A549 (cell line): ENCODE measurements at regions of chr17 and their contacts with region 1.

Region 1: DNA sequence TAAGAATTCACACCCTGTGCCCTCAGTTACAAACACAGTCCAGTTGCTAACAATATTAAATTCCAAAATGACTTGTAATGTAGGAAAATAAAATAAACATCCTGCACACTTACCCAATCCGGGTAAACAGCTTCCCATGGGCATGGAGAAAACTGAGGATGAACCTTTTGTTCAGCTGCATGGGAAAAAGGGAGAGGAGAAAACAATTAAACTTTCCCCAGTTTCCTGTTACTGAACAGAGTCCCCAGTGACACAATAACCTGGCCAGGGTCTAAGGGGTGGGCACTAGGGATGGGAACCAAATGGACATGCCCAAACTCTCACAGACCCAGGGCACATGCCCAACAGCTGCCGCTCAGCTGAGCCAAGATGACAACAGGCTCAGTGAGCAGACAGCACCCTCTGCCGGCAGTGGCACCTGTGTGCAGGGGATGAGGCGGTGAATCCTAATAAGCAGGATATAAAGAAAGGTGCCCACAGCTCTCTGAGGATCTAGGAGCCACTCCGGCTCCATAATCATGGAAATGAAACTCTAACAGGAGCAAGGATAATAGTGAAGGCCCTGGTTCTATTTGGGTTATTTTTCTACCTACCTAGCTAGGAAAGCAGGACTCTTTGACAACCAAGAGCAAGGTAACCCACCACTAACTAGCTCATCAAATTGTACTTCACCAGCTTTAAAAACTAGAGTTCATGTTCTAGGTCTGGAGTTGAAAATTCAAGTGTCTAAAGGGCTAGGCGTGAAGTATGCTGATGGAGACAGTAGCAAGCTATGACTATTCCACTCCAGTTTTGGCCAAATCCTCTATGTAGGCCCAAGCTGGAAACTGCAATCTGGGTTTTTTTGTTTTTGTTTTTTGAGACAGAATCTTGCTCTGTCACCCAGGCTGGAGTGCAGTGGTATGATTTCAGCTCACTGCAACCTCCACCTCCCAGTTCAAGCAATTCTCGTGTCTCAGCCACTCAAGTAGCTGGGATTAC is 58.8 kb downstream of the SMG6 start:
- DNase-seq: peak; percentile 84 to 94
- ATAC-seq: peak; percentile 98 to 99
- H3K4me3 ChIP-seq: no peak overlapping the region
- H3K27ac ChIP-seq: no peak overlapping the region
- H3K4me1 ChIP-seq: peaks cover 16% of the 10 kb centered on the region
- CTCF ChIP-seq: peak; percentile 99
- EP300 ChIP-seq: no peak; a peak in 1 of 5 replicates
- POLR2A ChIP-seq: no peak
- RAD21 ChIP-seq: peak; percentile 98 to 99

Region 2: DNA sequence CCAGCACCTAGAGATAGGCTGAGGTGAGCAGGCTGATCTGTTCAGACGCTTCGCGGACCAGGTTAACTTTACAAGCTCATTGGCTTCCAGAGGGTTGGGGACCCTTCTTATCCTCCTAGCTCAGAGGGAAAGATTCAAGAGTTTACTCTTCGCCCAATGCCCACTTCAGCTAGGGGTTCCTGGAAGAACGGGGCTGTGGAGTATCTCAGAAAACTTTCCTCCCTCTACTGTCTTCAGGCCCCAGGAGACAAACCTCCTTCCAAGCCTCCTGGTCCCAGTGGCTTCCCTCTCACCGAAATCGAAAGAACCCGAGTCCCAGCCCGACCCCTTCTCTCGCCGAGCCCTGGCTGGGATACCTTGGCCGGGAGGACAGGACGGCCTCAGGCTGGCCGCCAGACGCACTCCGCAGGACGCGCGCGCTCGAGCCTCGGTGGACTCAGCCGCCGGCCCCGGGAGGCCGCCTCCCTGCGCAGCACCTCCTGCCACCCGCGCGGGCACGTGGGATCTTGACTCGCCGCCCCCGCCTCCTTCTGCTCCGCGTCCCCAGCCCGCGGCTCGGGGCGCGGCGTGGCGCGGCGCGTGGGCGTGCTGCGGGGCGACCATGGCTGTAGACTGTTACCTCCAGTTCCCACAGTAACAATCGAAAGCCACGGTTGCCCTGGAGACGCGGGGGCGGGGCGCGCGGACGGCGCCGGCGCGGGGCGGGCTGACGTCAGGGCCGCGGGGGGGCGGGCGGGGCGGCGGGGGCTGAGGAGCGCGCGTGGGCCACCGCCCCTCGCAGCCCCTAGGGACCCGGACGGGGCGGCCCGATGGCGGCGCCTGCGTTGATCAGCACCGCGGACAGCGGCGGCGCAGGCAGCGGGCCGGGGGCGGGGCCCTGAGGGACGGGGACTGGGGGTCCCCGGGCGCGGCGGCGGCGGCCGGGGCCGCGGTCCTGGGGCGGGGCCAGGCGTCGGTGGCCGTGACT is 195.2 kb before region 1 on chr17:
- CTCF ChIA-PET with region 1: interaction called, 492 read pairs
- POLR2A ChIA-PET with region 1: interaction called, 8 read pairs
- DNase-seq: peak; percentile 74 to 81
- ATAC-seq: peak; percentile 17 to 30
- H3K4me3 ChIP-seq: peak overlapping the region; percentile 70
- H3K27ac ChIP-seq: peak overlapping the region; percentile 82 to 89
- H3K4me1 ChIP-seq: peaks cover 7% of the 10 kb centered on the region; the same call in 2 of the 3 replicates
- CTCF ChIP-seq: no peak
- EP300 ChIP-seq: no peak
- POLR2A ChIP-seq: peak; percentile 32; the same call in 1 of the 2 replicates
- RAD21 ChIP-seq: no peak

Region 3: GRCh38 chr17:2094891-2095535 is 149.8 kb before region 1 on chr17:
- CTCF ChIA-PET with region 1: interaction called, 31 read pairs
- POLR2A ChIA-PET with region 1: no interaction called
- DNase-seq: peak in 1 of 2 experiments; percentile 31
- ATAC-seq: peak; percentile 44 to 72; a peak in 4 of 6 replicates
- H3K4me3 ChIP-seq: no peak overlapping the region
- H3K27ac ChIP-seq: no peak overlapping the region
- H3K4me1 ChIP-seq: no peaks in the 10 kb centered on the region
- CTCF ChIP-seq: no peak
- EP300 ChIP-seq: no peak
- POLR2A ChIP-seq: no peak
- RAD21 ChIP-seq: peak in 1 of 2 experiments; percentile 37; a peak in 1 of 5 replicates

Region 4: GRCh38 chr17:2172077-2172851 is 72.6 kb before region 1 on chr17:
- CTCF ChIA-PET with region 1: interaction called, 13 read pairs
- POLR2A ChIA-PET with region 1: no interaction called
- DNase-seq: peak in 1 of 2 experiments; percentile 26
- ATAC-seq: peak in 1 of 2 experiments; percentile 17; a peak in 1 of 6 replicates
- H3K4me3 ChIP-seq: no peak overlapping the region
- H3K27ac ChIP-seq: peak overlapping the region; percentile 10 to 29; a peak in 3 of 6 replicates
- H3K4me1 ChIP-seq: peaks cover 37% of the 10 kb centered on the region
- CTCF ChIP-seq: no peak
- EP300 ChIP-seq: no peak
- POLR2A ChIP-seq: no peak
- RAD21 ChIP-seq: no peak

Region 5: DNA sequence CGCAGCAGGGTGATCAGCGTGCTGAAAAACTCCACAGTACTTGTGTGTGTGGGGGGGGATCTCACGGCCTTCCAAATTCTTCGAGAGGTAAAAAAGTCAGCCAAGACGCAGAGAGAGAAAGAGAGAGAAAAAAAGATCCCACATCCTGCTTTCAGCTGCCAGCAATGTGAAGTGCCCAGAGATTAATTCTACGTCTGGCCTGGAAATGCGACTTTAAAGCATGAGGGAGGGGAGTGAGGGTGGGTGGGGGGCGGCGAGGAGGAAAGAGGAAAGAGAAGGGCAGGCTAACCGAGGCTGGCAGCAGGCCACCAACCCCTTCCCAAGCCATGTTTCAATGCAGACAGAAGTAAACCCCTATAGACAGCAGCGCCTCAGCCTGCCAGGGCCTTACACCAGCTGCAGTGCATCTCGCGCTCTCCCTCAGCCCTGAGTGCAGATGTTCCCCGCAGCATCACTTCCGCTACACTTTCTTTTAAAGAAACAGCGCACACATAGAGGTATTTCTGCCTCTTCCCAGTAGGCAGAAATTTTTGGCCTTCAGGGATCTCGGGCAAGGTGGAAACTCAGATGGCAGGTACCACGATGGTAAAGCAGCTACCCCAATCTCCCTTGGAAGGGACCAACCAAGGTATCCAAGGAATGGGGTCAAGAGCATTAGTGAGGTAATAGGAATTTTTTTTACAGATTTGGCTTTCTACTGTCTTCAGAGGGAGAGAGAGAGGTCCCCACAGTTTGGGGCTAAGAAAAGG is 29.0 kb before region 1 on chr17:
- CTCF ChIA-PET with region 1: interaction called, 46 read pairs
- POLR2A ChIA-PET with region 1: no interaction called
- DNase-seq: no peak
- ATAC-seq: peak; percentile 20 to 48; a peak in 2 of 6 replicates
- H3K4me3 ChIP-seq: no peak overlapping the region
- H3K27ac ChIP-seq: no peak overlapping the region
- H3K4me1 ChIP-seq: no peaks in the 10 kb centered on the region
- CTCF ChIP-seq: no peak
- EP300 ChIP-seq: no peak
- POLR2A ChIP-seq: no peak
- RAD21 ChIP-seq: no peak

Region 6: GRCh38 chr17:2295575-2295974 is 50.7 kb after region 1 on chr17:
- CTCF ChIA-PET with region 1: interaction called, 19 read pairs
- POLR2A ChIA-PET with region 1: no interaction called
- DNase-seq: no peak
- ATAC-seq: no peak
- H3K4me3 ChIP-seq: no peak overlapping the region
- H3K27ac ChIP-seq: no peak overlapping the region
- H3K4me1 ChIP-seq: peaks cover 7% of the 10 kb centered on the region; the same call in 1 of the 3 replicates
- CTCF ChIP-seq: no peak
- EP300 ChIP-seq: no peak
- POLR2A ChIP-seq: no peak
- RAD21 ChIP-seq: no peak

Region 7: GRCh38 chr17:2484876-2485275 is 240.0 kb after region 1 on chr17:
- CTCF ChIA-PET with region 1: no interaction called
- POLR2A ChIA-PET with region 1: no interaction called
- DNase-seq: no peak
- ATAC-seq: peak in 1 of 2 experiments; percentile 27; a peak in 2 of 6 replicates
- H3K4me3 ChIP-seq: no peak overlapping the region
- H3K27ac ChIP-seq: no peak overlapping the region
- H3K4me1 ChIP-seq: peaks cover 23% of the 10 kb centered on the region
- CTCF ChIP-seq: no peak
- EP300 ChIP-seq: no peak
- POLR2A ChIP-seq: no peak
- RAD21 ChIP-seq: no peak